HEK293T (cell line): ENCODE measurements at regions of chr7 and their contacts with region 1.

Region 1: GRCh38 chr7:112056409-112056808 is 149.8 kb downstream of the DOCK4 start:
- DNase-seq: no peak

Region 2: DNA sequence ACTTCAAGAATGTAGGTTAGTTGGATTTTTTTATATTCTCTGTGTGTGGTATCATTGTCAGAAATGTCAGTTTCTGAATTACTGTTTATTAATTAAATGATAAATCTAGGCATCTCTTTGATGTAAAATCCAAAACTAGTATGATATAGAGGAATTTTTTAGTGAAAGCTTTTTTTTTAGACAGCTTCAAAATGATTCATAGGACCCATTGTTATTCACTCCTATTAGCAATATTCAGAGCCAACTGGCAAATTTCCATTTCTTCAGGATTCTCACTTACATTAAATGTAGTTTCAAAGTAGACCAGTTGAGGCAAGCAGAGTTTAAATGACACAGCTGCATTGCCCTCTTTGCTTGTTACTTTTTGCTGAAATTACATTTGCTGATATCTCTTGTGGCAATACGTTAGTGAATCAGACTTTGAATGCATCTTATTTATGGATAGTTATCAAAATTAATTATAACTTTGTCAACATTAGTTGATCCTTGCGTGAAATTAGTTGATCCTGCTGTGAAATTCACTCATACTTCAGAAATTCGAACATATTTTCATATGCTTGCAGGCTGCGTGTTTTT is 170.4 kb after region 1 on chr7:
- CTCF ChIA-PET with region 1: no interaction called
- POLR2A ChIA-PET with region 1: no interaction called
- DNase-seq: no peak

Region 3: DNA sequence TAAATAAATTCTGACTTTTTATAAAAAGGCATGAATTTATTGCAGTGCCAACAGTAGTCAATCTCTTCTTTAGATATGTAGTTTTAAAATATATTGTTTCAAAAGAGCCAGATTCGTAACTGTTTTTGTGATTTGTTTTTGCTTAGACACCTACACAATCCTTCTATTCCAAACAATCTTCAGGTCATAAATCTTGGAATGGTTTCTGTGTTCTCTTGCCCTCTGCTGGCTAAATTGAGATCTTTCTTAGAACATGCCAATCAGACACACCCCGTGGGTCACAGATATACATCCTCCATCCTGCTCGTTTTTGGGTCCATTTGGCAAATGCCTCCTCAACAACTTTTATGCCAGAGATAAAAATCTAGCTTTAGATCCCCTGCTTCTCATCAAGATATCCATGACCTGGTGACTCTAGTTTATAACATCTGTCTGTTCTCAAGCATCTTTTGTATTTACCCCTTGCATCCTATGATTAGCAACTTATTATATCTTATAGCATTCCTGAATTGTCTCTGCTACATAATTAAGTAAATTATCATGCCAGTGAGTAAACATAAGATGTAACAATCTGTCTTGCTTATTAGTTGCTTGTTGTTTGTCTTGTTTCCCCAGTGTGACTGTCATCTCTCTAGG is 358.6 kb after region 1 on chr7:
- CTCF ChIA-PET with region 1: interaction called, 14 read pairs
- POLR2A ChIA-PET with region 1: no interaction called
- DNase-seq: peak; percentile 59